ENCODE measurements at regions of chr3 and their contacts with region 1.

Region 1: GRCh38 chr3:57637391-57637790 is 40.2 kb upstream of the ARF4 start:
- DNase-seq: no peak
- H3K4me3 ChIP-seq: no peak overlapping the region
- H3K27ac ChIP-seq: no peak overlapping the region
- H3K4me1 ChIP-seq: no peaks in the 10 kb centered on the region
- H3K27me3 ChIP-seq: no peaks in the 10 kb centered on the region
- CTCF ChIP-seq: no peak
- POLR2A ChIP-seq: no peak

Region 2: GRCh38 chr3:57696801-57697321 is 59.5 kb after region 1 on chr3:
- CTCF ChIA-PET with region 1: no interaction called
- POLR2A ChIA-PET with region 1: no interaction called
- dilution Hi-C with region 1: no loop called
- intact Hi-C with region 1: no loop called
- DNase-seq: no peak
- H3K4me3 ChIP-seq: no peak overlapping the region
- H3K27ac ChIP-seq: no peak overlapping the region
- H3K4me1 ChIP-seq: no peaks in the 10 kb centered on the region
- H3K27me3 ChIP-seq: no peaks in the 10 kb centered on the region
- CTCF ChIP-seq: no peak
- POLR2A ChIP-seq: no peak

Region 3: GRCh38 chr3:57826245-57826951 is 189.0 kb after region 1 on chr3:
- CTCF ChIA-PET with region 1: interaction called, 3 read pairs
- POLR2A ChIA-PET with region 1: no interaction called
- dilution Hi-C with region 1: no loop called
- intact Hi-C with region 1: loop called (anchors 10 kb)
- DNase-seq: peak; percentile 21
- H3K4me3 ChIP-seq: no peak overlapping the region
- H3K27ac ChIP-seq: no peak overlapping the region
- H3K4me1 ChIP-seq: no peaks in the 10 kb centered on the region
- H3K27me3 ChIP-seq: no peaks in the 10 kb centered on the region
- CTCF ChIP-seq: no peak
- POLR2A ChIP-seq: no peak

Region 4: GRCh38 chr3:57992452-57993213 is 355.2 kb after region 1 on chr3:
- CTCF ChIA-PET with region 1: no interaction called
- POLR2A ChIA-PET with region 1: no interaction called
- dilution Hi-C with region 1: no loop called
- intact Hi-C with region 1: no loop called
- DNase-seq: no peak
- H3K4me3 ChIP-seq: no peak overlapping the region
- H3K27ac ChIP-seq: no peak overlapping the region
- H3K4me1 ChIP-seq: no peaks in the 10 kb centered on the region
- H3K27me3 ChIP-seq: no peaks in the 10 kb centered on the region
- CTCF ChIP-seq: no peak
- POLR2A ChIP-seq: no peak

Measured in endothelial cell of umbilical vein (primary cell).